ENCODE measurements at regions of chr16 and their contacts with region 1.

Region 1: GRCh38 chr16:28950648-28951409 is at the start of gene NFATC2IP:
- DNase-seq: peak; percentile 100
- ATAC-seq: peak; percentile 96
- H3K4me3 Mint-ChIP-seq: peak within 1 kb of the TSS; percentile 97
- H3K27ac Mint-ChIP-seq: peak within 1 kb of the TSS; percentile 89
- H3K4me1 Mint-ChIP-seq: peaks cover 33% of the 10 kb centered on the region
- H3K27me3 Mint-ChIP-seq: no peaks in the 10 kb centered on the region
- total RNA-seq, gene NFATC2IP: 120 to 133 TPM

Region 2: GRCh38 chr16:28863929-28864793 is 86.7 kb before region 1 on chr16:
- CTCF ChIA-PET with region 1: interaction called, 18 read pairs
- DNase-seq: no peak
- ATAC-seq: no peak
- H3K4me3 Mint-ChIP-seq: peak overlapping the region; percentile 89
- H3K27ac Mint-ChIP-seq: peak overlapping the region; percentile 96
- H3K4me1 Mint-ChIP-seq: peaks cover 23% of the 10 kb centered on the region
- H3K27me3 Mint-ChIP-seq: no peaks in the 10 kb centered on the region

Region 3: GRCh38 chr16:28924732-28925385 is 26.0 kb before region 1 on chr16 and contains the start of gene RABEP2:
- CTCF ChIA-PET with region 1: interaction called, 13 read pairs
- DNase-seq: peak; percentile 97
- ATAC-seq: peak; percentile 93
- H3K4me3 Mint-ChIP-seq: peak within 1 kb of the TSS; percentile 89
- H3K27ac Mint-ChIP-seq: peak within 1 kb of the TSS; percentile 96
- H3K4me1 Mint-ChIP-seq: peaks cover 18% of the 10 kb centered on the region
- H3K27me3 Mint-ChIP-seq: no peaks in the 10 kb centered on the region
- total RNA-seq, gene RABEP2: 18.0 to 19.1 TPM

Region 4: GRCh38 chr16:28930652-28931051 is 20.2 kb before region 1 on chr16:
- CTCF ChIA-PET with region 1: interaction called, 22 read pairs
- DNase-seq: no peak
- ATAC-seq: no peak
- H3K4me3 Mint-ChIP-seq: no peak overlapping the region
- H3K27ac Mint-ChIP-seq: peak overlapping the region; percentile 4
- H3K4me1 Mint-ChIP-seq: peaks cover 16% of the 10 kb centered on the region
- H3K27me3 Mint-ChIP-seq: no peaks in the 10 kb centered on the region

Region 5: GRCh38 chr16:28935924-28936783 is 14.7 kb before region 1 on chr16:
- CTCF ChIA-PET with region 1: interaction called, 22 read pairs
- DNase-seq: peak; percentile 87
- ATAC-seq: peak; percentile 100
- H3K4me3 Mint-ChIP-seq: peak overlapping the region; percentile 56
- H3K27ac Mint-ChIP-seq: no peak overlapping the region
- H3K4me1 Mint-ChIP-seq: peaks cover 11% of the 10 kb centered on the region
- H3K27me3 Mint-ChIP-seq: no peaks in the 10 kb centered on the region